GM12878 (cell line): ENCODE measurements at regions of chr17 and their contacts with region 1.

Region 1: DNA sequence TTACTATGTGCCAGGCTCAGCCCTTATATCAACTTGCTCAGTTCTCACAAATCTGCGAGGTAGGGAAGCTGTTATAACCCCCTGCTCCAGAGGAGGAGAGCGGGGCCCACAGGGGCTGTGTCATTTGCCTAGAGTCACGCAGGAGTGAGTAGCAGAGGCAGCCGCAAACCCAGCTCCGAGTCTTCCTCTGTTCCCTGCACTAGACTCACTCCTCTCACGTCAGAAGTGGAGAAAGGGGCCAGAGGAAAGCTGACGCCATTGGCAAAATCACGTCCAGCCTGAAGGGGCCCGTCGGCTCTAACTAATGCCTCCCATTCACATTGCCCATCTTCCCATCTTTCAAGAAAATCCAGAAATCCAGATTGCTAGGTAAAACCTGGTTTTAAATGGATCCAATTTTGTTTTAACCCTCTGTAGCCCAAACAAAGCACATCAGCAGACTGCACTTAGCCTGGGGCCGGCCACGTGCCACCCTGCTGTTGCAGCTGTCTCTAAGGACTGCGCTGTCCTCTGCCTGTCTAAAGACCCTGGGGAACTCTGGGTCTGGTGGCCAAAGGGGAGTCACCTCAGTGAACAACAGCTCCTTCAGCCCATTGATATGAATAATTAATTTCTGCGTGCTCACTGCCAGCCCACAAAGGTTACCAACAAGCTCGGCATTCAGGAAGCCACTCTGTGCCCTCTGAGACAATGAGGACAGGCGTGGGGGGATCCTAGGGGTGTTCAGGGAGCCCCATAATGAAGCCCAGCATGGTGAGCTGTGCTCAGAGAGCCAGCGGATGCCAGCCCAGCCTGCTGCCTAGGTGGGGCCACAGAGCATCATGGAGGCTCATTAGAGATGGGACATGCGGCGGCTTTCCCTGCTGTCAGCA is 36.7 kb upstream of the ABR start:
- DNase-seq: no peak
- ATAC-seq: peak; percentile 81
- H3K4me3 ChIP-seq: peak overlapping the region; percentile 39; the same call in 1 of the 2 replicates
- H3K27ac ChIP-seq: peak overlapping the region; percentile 80
- H3K4me1 ChIP-seq: peaks cover 33% of the 10 kb centered on the region
- H3K27me3 ChIP-seq: no peaks in the 10 kb centered on the region
- CTCF ChIP-seq: no peak
- EP300 ChIP-seq: peak in 1 of 2 experiments; percentile 1; a peak in 1 of 4 replicates
- POLR2A ChIP-seq: no peak
- RAD21 ChIP-seq: no peak

Region 2: GRCh38 chr17:1179818-1180742 is 36.4 kb before region 1 on chr17 and contains the start of gene ABR:
- CTCF ChIA-PET with region 1: interaction called, 7 read pairs
- POLR2A ChIA-PET with region 1: interaction called, 13 read pairs
- RAD21 ChIA-PET with region 1: interaction called, 41 read pairs
- SMC1A ChIA-PET with region 1: interaction called, 6 read pairs
- in situ Hi-C with region 1: no loop called
- intact Hi-C with region 1: no loop called
- DNase-seq: no peak
- ATAC-seq: peak; percentile 5
- H3K4me3 ChIP-seq: peak within 1 kb of the TSS; percentile 85
- H3K27ac ChIP-seq: peak within 1 kb of the TSS; percentile 89
- H3K4me1 ChIP-seq: peaks cover 57% of the 10 kb centered on the region
- H3K27me3 ChIP-seq: no peaks in the 10 kb centered on the region
- CTCF ChIP-seq: no peak
- EP300 ChIP-seq: no peak
- POLR2A ChIP-seq: peak; percentile 61
- RAD21 ChIP-seq: no peak
- polyA plus RNA-seq, gene ABR: 1.4 to 2.5 TPM

Region 3: GRCh38 chr17:1186923-1187771 is 29.3 kb before region 1 on chr17:
- CTCF ChIA-PET with region 1: interaction called, 21 read pairs
- POLR2A ChIA-PET with region 1: interaction called, 13 read pairs
- RAD21 ChIA-PET with region 1: interaction called, 41 read pairs
- SMC1A ChIA-PET with region 1: interaction called, 9 read pairs
- in situ Hi-C with region 1: no loop called
- intact Hi-C with region 1: no loop called
- DNase-seq: no peak
- ATAC-seq: peak; percentile 78
- H3K4me3 ChIP-seq: no peak overlapping the region
- H3K27ac ChIP-seq: no peak overlapping the region
- H3K4me1 ChIP-seq: peaks cover 56% of the 10 kb centered on the region
- H3K27me3 ChIP-seq: no peaks in the 10 kb centered on the region
- CTCF ChIP-seq: peak; percentile 92 to 99 (median 92)
- EP300 ChIP-seq: no peak
- POLR2A ChIP-seq: no peak
- RAD21 ChIP-seq: peak; percentile 84

Region 4: GRCh38 chr17:1197781-1198490 is 18.5 kb before region 1 on chr17:
- CTCF ChIA-PET with region 1: interaction called, 16 read pairs
- POLR2A ChIA-PET with region 1: interaction called, 7 read pairs
- RAD21 ChIA-PET with region 1: interaction called, 40 read pairs
- SMC1A ChIA-PET with region 1: interaction called, 34 read pairs
- in situ Hi-C with region 1: no loop called
- intact Hi-C with region 1: no loop called
- DNase-seq: peak; percentile 97
- ATAC-seq: peak; percentile 88
- H3K4me3 ChIP-seq: peak overlapping the region; percentile 29; the same call in 1 of the 2 replicates
- H3K27ac ChIP-seq: peak overlapping the region; percentile 89
- H3K4me1 ChIP-seq: peaks cover 56% of the 10 kb centered on the region
- H3K27me3 ChIP-seq: no peaks in the 10 kb centered on the region
- CTCF ChIP-seq: no peak
- EP300 ChIP-seq: peak; percentile 64 to 81; a peak in 3 of 4 replicates
- POLR2A ChIP-seq: peak; percentile 57; the same call in 1 of the 2 replicates
- RAD21 ChIP-seq: 0 out of 2 replicates have a peak, but pooled peaks have one; percentile 11

Region 5: GRCh38 chr17:1203111-1203966 is 13.1 kb before region 1 on chr17:
- CTCF ChIA-PET with region 1: interaction called, 16 read pairs
- POLR2A ChIA-PET with region 1: interaction called, 7 read pairs
- RAD21 ChIA-PET with region 1: interaction called, 40 read pairs
- SMC1A ChIA-PET with region 1: interaction called, 34 read pairs
- in situ Hi-C with region 1: no loop called
- intact Hi-C with region 1: no loop called
- DNase-seq: no peak
- ATAC-seq: 0 out of 3 replicates have a peak, but pooled peaks have one; percentile 6
- H3K4me3 ChIP-seq: no peak overlapping the region
- H3K27ac ChIP-seq: no peak overlapping the region
- H3K4me1 ChIP-seq: peaks cover 61% of the 10 kb centered on the region
- H3K27me3 ChIP-seq: no peaks in the 10 kb centered on the region
- CTCF ChIP-seq: no peak
- EP300 ChIP-seq: no peak
- POLR2A ChIP-seq: no peak
- RAD21 ChIP-seq: no peak